Panc1 (cell line): ENCODE measurements at regions of chr6 and their contacts with region 1.

Region 1: DNA sequence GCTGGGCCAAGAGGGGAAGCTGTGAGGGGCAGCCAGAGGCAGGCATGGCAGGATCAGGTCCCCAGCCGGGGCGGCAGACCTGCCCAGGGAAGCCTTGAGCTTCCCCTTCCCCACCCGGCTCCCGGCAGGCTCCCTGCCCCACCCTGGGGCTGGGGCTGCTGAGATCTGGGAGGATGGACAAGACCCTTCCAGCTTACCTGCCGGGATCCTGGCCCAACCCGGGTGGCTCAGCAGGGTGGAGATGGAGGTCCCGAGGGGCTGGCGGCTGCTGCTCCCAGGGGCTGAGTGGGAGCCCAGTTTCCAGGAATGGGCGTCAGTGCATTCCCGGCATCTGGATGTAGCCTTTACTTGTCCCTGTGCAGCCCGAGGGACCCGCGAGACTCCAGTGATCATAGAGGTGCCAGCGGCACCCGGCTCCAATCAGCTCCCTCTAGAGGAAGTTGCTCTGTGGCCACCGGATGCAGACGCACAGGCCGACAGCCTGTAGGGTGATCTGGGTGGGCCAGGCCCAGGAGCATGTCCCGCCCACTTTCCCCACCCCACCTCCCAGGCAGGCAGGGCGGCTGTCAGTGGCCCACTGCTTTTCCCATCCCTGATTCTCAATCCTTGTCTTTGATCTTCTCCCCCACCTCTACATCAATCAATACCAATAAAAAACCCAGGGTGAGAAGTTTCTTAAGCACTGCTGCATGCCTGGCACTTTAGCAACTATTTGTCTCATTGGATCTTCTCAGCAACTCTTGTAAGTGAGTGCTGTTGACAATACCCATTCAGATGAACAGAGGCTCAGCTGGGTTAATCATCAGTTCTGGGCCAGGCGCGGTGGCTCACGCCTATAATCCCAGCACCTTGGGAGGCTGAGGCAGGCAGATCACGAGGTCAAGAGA is at the start of gene BAK1:
- DNase-seq: no peak
- ATAC-seq: peak; percentile 97
- H3K4me3 ChIP-seq: peak within 1 kb of the TSS; percentile 94 to 98
- H3K27ac ChIP-seq: peak within 1 kb of the TSS; percentile 92
- H3K4me1 ChIP-seq: peaks cover 16% of the 10 kb centered on the region
- H3K27me3 ChIP-seq: no peaks in the 10 kb centered on the region
- CTCF ChIP-seq: peak; percentile 78
- total RNA-seq, gene BAK1: 31.5 TPM

Region 2: GRCh38 chr6:33454009-33454946 is 125.8 kb before region 1 on chr6 and contains the start of gene ZBTB9:
- CTCF ChIA-PET with region 1: no interaction called
- POLR2A ChIA-PET with region 1: no interaction called
- in situ Hi-C with region 1: no loop called
- intact Hi-C with region 1: loop called (anchors 10 kb)
- DNase-seq: peak; percentile 67
- ATAC-seq: peak; percentile 99
- H3K4me3 ChIP-seq: peak within 1 kb of the TSS; percentile 78 to 97
- H3K27ac ChIP-seq: peak within 1 kb of the TSS; percentile 97
- H3K4me1 ChIP-seq: peaks cover 7% of the 10 kb centered on the region; the same call in 1 of the 2 replicates
- H3K27me3 ChIP-seq: no peaks in the 10 kb centered on the region
- CTCF ChIP-seq: no peak
- total RNA-seq, gene ZBTB9: 17.6 TPM

Region 3: DNA sequence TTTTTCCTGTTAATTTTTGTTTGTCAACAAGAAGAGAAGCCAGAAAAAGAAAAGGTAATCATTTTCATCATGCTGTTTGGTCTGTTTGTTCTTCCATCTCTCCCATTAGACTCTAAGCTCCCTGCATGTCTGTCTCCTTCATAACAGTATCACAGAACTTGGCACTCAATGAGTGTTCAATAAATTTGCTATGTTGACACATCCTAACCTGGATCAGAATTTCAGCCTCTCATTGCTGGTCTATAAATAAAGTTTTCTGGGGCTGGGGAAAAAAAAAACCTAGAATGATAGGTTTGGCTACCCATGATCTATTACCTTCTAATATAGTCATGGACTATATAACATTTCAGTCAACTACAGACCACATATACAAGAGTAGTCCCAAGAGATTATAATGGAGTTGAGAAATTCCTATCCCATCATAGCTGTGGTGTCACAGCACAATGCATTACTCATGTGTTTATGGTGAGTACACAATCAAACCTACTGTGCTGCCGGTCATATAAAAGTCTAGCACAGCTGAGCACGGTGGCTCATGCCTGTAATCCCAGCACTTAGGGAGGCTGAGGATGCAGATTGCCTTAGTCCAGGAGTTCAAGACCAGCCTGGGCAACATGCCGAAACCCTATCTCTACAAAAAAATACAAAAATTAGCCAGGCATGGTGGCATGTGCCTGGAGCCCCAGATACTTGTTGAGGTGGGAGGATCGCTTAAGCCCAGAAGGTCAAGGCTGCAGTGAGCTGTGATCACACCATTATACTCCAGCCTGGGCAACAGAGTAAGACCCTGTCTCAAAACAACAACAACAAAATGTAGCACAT is 806.5 kb after region 1 on chr6:
- CTCF ChIA-PET with region 1: interaction called, 10 read pairs
- POLR2A ChIA-PET with region 1: no interaction called
- in situ Hi-C with region 1: no loop called
- intact Hi-C with region 1: no loop called
- DNase-seq: no peak
- ATAC-seq: peak; percentile 84
- H3K4me3 ChIP-seq: no peak overlapping the region
- H3K27ac ChIP-seq: no peak overlapping the region
- H3K4me1 ChIP-seq: peaks cover 44% of the 10 kb centered on the region
- H3K27me3 ChIP-seq: no peaks in the 10 kb centered on the region
- CTCF ChIP-seq: no peak